Psoas muscle (tissue), 8 donors: ENCODE measurements at regions of chr11 and their contacts with region 1.

Region 1: GRCh38 chr11:113730887-113731726 is 25.0 kb upstream of the TMPRSS5 start:
- DNase-seq: peak in 1 of 2 donors; percentile 20
- ATAC-seq: peak; percentile 86 to 94 (median 88)
- H3K4me3 ChIP-seq: no peak overlapping the region
- H3K27ac ChIP-seq: no peak overlapping the region
- H3K4me1 ChIP-seq: peaks cover 8% of the 10 kb centered on the region
- H3K27me3 ChIP-seq: no peaks in the 10 kb centered on the region
- CTCF ChIP-seq: peak; percentile 74

Region 2: GRCh38 chr11:113305440-113306336 is 425.4 kb before region 1 on chr11:
- intact Hi-C with region 1: loop called (anchors 2 kb)
- DNase-seq: peak; percentile 76 to 87
- ATAC-seq: peak; percentile 92 to 99 (median 94)
- H3K4me3 ChIP-seq: no peak overlapping the region
- H3K27ac ChIP-seq: no peak overlapping the region
- H3K4me1 ChIP-seq: no peaks in the 10 kb centered on the region
- H3K27me3 ChIP-seq: no peaks in the 10 kb centered on the region
- CTCF ChIP-seq: peak; percentile 95

Region 3: GRCh38 chr11:113532697-113533424 is 198.2 kb before region 1 on chr11:
- intact Hi-C with region 1: loop called in 1 of 2 experiments (anchors 5 kb)
- DNase-seq: peak; percentile 66 to 80
- ATAC-seq: peak; percentile 73 to 91 (median 74)
- H3K4me3 ChIP-seq: no peak overlapping the region
- H3K27ac ChIP-seq: no peak overlapping the region
- H3K4me1 ChIP-seq: peaks cover 15% of the 10 kb centered on the region
- H3K27me3 ChIP-seq: no peaks in the 10 kb centered on the region
- CTCF ChIP-seq: peak; percentile 81

Region 4: DNA sequence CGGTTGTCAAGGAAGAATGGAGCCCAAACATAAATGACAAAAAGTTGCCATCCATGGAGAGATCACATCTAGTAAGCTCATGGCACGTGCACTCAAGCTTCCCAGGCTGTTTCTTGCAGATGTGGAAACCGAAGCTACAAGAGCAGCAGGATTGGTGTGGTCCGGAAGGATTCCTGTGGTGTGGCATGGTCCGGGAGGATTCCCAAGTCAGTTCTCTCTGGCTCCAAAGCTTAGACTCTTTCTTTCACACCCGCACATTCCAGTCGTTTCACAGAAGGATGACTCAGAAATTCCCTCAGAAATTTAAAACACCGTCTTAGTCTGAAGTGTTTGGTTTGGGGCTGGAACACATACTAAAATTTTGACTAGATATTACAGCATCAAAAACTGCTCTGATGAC is 177.9 kb before region 1 on chr11:
- intact Hi-C with region 1: loop called in 1 of 2 experiments (anchors 10 kb)
- DNase-seq: peak in 1 of 2 donors; percentile 22
- ATAC-seq: peak in 3 of 4 donors; percentile 45 to 56 (median 47)
- H3K4me3 ChIP-seq: no peak overlapping the region
- H3K27ac ChIP-seq: no peak overlapping the region
- H3K4me1 ChIP-seq: no peaks in the 10 kb centered on the region
- H3K27me3 ChIP-seq: no peaks in the 10 kb centered on the region
- CTCF ChIP-seq: no peak

Region 5: GRCh38 chr11:113593698-113594308 is 137.3 kb before region 1 on chr11:
- intact Hi-C with region 1: loop called in 1 of 2 experiments (anchors 10 kb)
- DNase-seq: peak in 1 of 2 donors; percentile 50
- ATAC-seq: peak; percentile 75 to 96 (median 94)
- H3K4me3 ChIP-seq: no peak overlapping the region
- H3K27ac ChIP-seq: no peak overlapping the region
- H3K4me1 ChIP-seq: no peaks in the 10 kb centered on the region
- H3K27me3 ChIP-seq: no peaks in the 10 kb centered on the region
- CTCF ChIP-seq: no peak